ENCODE measurements at regions of chr10 and their contacts with region 1.

Region 1: GRCh38 chr10:80046629-80047441 is 31.6 kb upstream of the TMEM254 start:
- DNase-seq: peak; percentile 51 to 63 (median 55)
- H3K4me3 ChIP-seq: no peak overlapping the region
- H3K4me3 Mint-ChIP-seq: no peak overlapping the region
- H3K27ac ChIP-seq: no peak overlapping the region
- H3K27ac Mint-ChIP-seq: no peak overlapping the region
- H3K4me1 ChIP-seq: no peaks in the 10 kb centered on the region
- H3K4me1 Mint-ChIP-seq: peaks cover 0 to 2% (median under 1%) of the 10 kb centered on the region in 4 donors
- H3K27me3 ChIP-seq: no peaks in the 10 kb centered on the region
- H3K27me3 Mint-ChIP-seq: peaks cover 0 to 3% of the 10 kb centered on the region in 2 donors

Region 2: GRCh38 chr10:80064120-80064886 is 17.5 kb after region 1 on chr10:
- CTCF ChIA-PET with region 1: interaction called, 47 read pairs
- POLR2A ChIA-PET with region 1: no interaction called
- intact Hi-C with region 1: no loop called
- DNase-seq: no peak
- H3K4me3 ChIP-seq: no peak overlapping the region
- H3K4me3 Mint-ChIP-seq: no peak overlapping the region
- H3K27ac ChIP-seq: no peak overlapping the region
- H3K27ac Mint-ChIP-seq: no peak overlapping the region
- H3K4me1 ChIP-seq: no peaks in the 10 kb centered on the region
- H3K4me1 Mint-ChIP-seq: no peaks in the 10 kb centered on the region
- H3K27me3 ChIP-seq: no peaks in the 10 kb centered on the region
- H3K27me3 Mint-ChIP-seq: peaks cover 0 to 2% of the 10 kb centered on the region in 2 donors

Region 3: DNA sequence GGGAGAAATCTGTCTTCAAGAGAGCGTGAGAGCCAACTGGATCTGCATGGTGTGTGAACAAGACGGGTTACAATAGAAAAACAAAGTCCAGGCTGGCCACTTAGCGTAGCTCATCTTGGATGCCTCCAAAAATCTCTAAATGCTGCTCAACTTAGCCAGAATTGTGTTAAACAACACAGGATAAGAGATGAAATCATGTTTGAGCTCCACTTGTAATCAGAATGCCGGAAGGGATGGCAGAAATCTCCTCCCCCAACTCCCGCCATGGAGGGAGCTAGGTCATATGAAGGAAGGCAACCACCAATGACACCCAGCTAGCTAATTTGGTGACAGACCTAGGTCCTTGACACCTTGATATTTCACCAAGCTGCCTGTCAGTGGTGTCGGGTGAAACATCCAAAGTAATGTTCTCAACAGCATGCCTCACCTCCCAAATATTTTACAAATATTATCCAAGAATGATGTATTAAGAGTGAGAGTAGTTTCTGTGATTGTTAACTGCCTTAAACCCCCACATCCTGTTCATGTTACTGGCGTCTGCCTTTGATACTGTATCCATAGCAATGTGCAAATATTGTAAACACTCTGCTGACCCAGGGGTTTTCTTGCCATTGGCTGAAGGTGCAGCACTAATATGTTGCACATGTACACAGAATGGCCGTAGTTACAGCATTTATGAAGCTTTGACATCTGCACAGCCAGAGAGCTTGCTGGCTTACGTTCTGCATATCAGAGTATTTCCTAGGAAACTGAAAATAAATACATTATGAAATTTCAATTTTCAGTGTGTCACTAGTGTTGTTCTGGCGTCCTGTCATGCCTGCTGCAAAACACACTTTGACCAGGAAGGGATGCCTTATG is 57.5 kb after region 1 on chr10:
- CTCF ChIA-PET with region 1: no interaction called
- POLR2A ChIA-PET with region 1: no interaction called
- intact Hi-C with region 1: no loop called
- DNase-seq: peak; percentile 50 to 64 (median 54)
- H3K4me3 ChIP-seq: no peak overlapping the region
- H3K4me3 Mint-ChIP-seq: peak overlapping the region in 4 of 8 donors; percentile 21 to 52 (median 36)
- H3K27ac ChIP-seq: no peak overlapping the region
- H3K27ac Mint-ChIP-seq: peak overlapping the region; percentile 72 to 89 (median 86)
- H3K4me1 ChIP-seq: peaks cover 18% of the 10 kb centered on the region
- H3K4me1 Mint-ChIP-seq: peaks cover 15 to 27% (median 19%) of the 10 kb centered on the region in 4 donors
- H3K27me3 ChIP-seq: no peaks in the 10 kb centered on the region
- H3K27me3 Mint-ChIP-seq: no peaks in the 10 kb centered on the region

Region 4: DNA sequence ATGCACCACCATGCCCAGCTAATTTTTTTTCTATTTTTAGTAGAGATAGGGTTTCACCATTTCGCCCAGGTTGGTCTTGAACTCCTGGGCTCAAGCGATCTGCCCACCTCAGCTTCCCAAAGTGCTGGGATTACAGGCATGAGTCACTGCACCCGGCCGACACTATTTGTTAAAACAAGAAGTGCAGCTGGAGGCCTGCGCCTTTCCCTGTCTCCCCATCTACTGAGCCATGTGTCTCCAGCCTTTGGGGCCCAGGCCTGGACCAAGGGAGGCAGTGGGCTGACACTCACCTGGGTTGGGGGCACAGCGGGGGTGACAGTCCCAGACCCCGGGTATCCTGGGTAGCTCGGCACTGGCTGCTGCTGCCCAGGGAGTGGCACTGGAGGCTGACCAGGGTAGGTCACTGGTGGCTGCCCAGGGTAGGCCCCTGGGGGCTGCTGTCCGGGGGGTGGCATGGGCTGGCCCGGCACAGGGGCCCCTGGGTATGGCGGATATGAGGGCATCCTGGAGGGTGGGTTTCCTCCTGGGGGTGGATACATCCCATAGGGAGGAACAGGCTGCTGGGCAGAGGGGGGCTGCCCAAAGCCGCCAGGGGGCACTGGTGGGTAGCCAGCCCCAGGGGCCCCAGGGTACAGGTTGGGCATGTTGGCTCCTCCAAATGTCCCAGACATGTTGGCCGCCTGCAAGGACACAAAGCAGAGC is 122.0 kb after region 1 on chr10:
- CTCF ChIA-PET with region 1: no interaction called
- POLR2A ChIA-PET with region 1: no interaction called
- intact Hi-C with region 1: no loop called
- DNase-seq: peak in 3 of 5 donors; percentile 12 to 25 (median 15)
- H3K4me3 ChIP-seq: no peak overlapping the region
- H3K4me3 Mint-ChIP-seq: no peak overlapping the region
- H3K27ac ChIP-seq: no peak overlapping the region
- H3K27ac Mint-ChIP-seq: peak overlapping the region in 2 of 7 donors; percentile 37 to 86
- H3K4me1 ChIP-seq: peaks cover 8% of the 10 kb centered on the region
- H3K4me1 Mint-ChIP-seq: peaks cover 9 to 16% (median 11%) of the 10 kb centered on the region in 4 donors
- H3K27me3 ChIP-seq: no peaks in the 10 kb centered on the region
- H3K27me3 Mint-ChIP-seq: no peaks in the 10 kb centered on the region

Measured in CD4-positive, alpha-beta memory T cell (primary cell).